A549 (cell line): ENCODE measurements at regions of chr12 and their contacts with region 1.

Region 1: DNA sequence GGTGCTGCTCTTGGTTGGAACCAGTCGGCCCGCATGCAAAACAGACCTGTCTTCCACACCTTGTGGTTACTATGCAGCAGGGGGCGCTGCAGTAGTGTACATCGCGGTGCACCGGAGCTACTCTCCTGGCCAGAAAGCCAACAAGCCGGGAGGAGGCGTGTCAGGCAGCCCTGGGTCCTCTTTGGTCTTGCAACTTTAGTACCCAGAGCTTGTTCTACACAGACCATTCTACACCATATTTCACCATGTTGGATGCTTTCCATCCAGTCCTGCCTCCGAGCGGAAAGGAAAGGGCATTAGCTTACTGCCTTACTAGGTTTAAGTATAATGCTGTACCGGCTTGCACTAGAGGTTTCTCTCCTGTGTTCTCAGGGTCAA is 927 bp upstream of the TMTC2 start:
- DNase-seq: peak; percentile 80 to 96
- ATAC-seq: peak; percentile 63 to 84
- H3K4me3 ChIP-seq: peak overlapping the region; percentile 85
- H3K27ac ChIP-seq: peak overlapping the region; percentile 73 to 92
- H3K4me1 ChIP-seq: peaks cover 24% of the 10 kb centered on the region
- CTCF ChIP-seq: peak; percentile 91
- EP300 ChIP-seq: no peak
- POLR2A ChIP-seq: no peak
- RAD21 ChIP-seq: peak; percentile 93 to 96

Region 2: DNA sequence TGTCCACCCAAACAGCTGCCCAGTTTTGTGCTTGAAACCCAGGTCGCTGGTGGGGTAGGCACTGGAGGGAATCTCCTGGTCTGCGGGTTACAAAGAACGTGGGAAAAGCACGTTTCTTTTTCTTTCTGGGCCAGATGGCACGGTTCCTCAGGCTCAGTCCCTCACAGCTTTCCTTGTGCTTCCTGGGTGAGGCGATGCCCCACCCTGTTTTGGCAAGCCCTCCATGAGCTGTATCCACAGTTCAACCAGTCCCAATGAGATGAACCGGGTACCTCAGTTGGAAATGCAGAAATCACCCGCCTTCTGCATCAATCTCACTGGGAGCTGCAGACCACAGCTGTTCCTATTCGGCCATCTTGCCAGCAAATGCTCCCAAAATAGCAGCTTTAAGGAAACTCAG is 50.5 kb before region 1 on chr12:
- CTCF ChIA-PET with region 1: interaction called, 10 read pairs
- POLR2A ChIA-PET with region 1: no interaction called
- DNase-seq: peak in 1 of 2 experiments; percentile 9
- ATAC-seq: peak in 1 of 2 experiments; percentile 53; a peak in 3 of 6 replicates
- H3K4me3 ChIP-seq: no peak overlapping the region
- H3K27ac ChIP-seq: peak overlapping the region; percentile 28 to 73; a peak in 3 of 6 replicates
- H3K4me1 ChIP-seq: 0 out of 3 replicates have a peak, but pooled peaks cover 7% of the 10 kb centered on the region
- CTCF ChIP-seq: no peak
- EP300 ChIP-seq: no peak
- POLR2A ChIP-seq: no peak
- RAD21 ChIP-seq: no peak

Region 3: GRCh38 chr12:82660541-82661325 is 25.0 kb before region 1 on chr12:
- CTCF ChIA-PET with region 1: interaction called, 20 read pairs
- POLR2A ChIA-PET with region 1: no interaction called
- DNase-seq: no peak
- ATAC-seq: no peak
- H3K4me3 ChIP-seq: no peak overlapping the region
- H3K27ac ChIP-seq: no peak overlapping the region
- H3K4me1 ChIP-seq: peaks cover 6% of the 10 kb centered on the region; the same call in 1 of the 3 replicates
- CTCF ChIP-seq: no peak
- EP300 ChIP-seq: no peak
- POLR2A ChIP-seq: no peak
- RAD21 ChIP-seq: no peak

Region 4: DNA sequence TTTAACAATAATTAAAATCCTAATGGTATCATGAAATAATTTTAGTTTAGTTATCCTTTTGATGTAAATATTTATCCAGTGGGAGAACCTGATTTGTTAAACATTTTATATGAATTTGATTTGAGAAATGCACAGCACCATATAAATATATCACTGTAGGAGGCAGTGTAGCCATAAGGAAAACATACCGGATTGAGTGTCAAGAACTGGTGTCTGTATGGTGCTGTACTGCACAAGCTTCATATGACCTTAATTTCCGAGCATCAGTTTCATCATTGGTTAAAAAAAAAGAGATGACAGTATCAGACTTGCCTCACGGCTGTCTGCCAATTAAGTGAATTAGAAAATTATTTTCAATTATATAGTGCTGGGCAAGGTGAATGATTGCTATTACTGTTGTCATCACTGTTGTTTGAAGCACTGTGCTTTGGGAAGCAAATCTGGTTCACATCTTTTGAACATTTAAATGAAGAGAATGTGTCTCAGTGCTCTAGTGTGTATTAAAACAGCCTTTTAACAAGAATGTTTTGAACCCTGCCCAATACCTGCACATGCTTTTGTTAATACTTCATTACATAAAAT is 73.1 kb after region 1 on chr12:
- CTCF ChIA-PET with region 1: interaction called, 17 read pairs
- POLR2A ChIA-PET with region 1: no interaction called
- DNase-seq: peak in 1 of 2 experiments; percentile 12
- ATAC-seq: no peak
- H3K4me3 ChIP-seq: no peak overlapping the region
- H3K27ac ChIP-seq: no peak overlapping the region
- H3K4me1 ChIP-seq: no peaks in the 10 kb centered on the region
- CTCF ChIP-seq: no peak
- EP300 ChIP-seq: no peak
- POLR2A ChIP-seq: no peak
- RAD21 ChIP-seq: peak in 1 of 2 experiments; percentile 26; a peak in 1 of 5 replicates

Region 5: GRCh38 chr12:82904219-82904790 is 218.5 kb after region 1 on chr12:
- CTCF ChIA-PET with region 1: no interaction called
- POLR2A ChIA-PET with region 1: no interaction called
- DNase-seq: no peak
- ATAC-seq: no peak
- H3K4me3 ChIP-seq: no peak overlapping the region
- H3K27ac ChIP-seq: no peak overlapping the region
- H3K4me1 ChIP-seq: no peaks in the 10 kb centered on the region
- CTCF ChIP-seq: no peak
- EP300 ChIP-seq: no peak
- POLR2A ChIP-seq: no peak
- RAD21 ChIP-seq: no peak

Region 6: GRCh38 chr12:84497819-84498218 is 1812.0 kb after region 1 on chr12:
- CTCF ChIA-PET with region 1: interaction called, 23 read pairs
- POLR2A ChIA-PET with region 1: no interaction called
- DNase-seq: peak in 1 of 2 experiments; percentile 35
- ATAC-seq: no peak
- H3K4me3 ChIP-seq: no peak overlapping the region
- H3K27ac ChIP-seq: no peak overlapping the region
- H3K4me1 ChIP-seq: no peaks in the 10 kb centered on the region
- CTCF ChIP-seq: peak; percentile 37; the same call in 2 of the 3 replicates
- EP300 ChIP-seq: no peak
- POLR2A ChIP-seq: no peak
- RAD21 ChIP-seq: peak; percentile 31 to 52; a peak in 2 of 5 replicates